Endothelial cell of umbilical vein (primary cell): ENCODE measurements at regions of chr16 and their contacts with region 1.

Region 1: GRCh38 chr16:4402439-4403132 is 13.8 kb downstream of the CORO7 start:
- DNase-seq: peak; percentile 59
- H3K4me3 ChIP-seq: no peak overlapping the region
- H3K27ac ChIP-seq: no peak overlapping the region
- H3K4me1 ChIP-seq: peaks cover 1% of the 10 kb centered on the region
- H3K27me3 ChIP-seq: no peaks in the 10 kb centered on the region
- CTCF ChIP-seq: peak; percentile 88 to 98
- POLR2A ChIP-seq: no peak

Region 2: GRCh38 chr16:3971261-3971660 is 431.3 kb before region 1 on chr16:
- CTCF ChIA-PET with region 1: no interaction called
- POLR2A ChIA-PET with region 1: no interaction called
- dilution Hi-C with region 1: no loop called
- intact Hi-C with region 1: no loop called
- DNase-seq: no peak
- H3K4me3 ChIP-seq: no peak overlapping the region
- H3K27ac ChIP-seq: no peak overlapping the region
- H3K4me1 ChIP-seq: no peaks in the 10 kb centered on the region
- H3K27me3 ChIP-seq: no peaks in the 10 kb centered on the region
- CTCF ChIP-seq: no peak
- POLR2A ChIP-seq: no peak

Region 3: DNA sequence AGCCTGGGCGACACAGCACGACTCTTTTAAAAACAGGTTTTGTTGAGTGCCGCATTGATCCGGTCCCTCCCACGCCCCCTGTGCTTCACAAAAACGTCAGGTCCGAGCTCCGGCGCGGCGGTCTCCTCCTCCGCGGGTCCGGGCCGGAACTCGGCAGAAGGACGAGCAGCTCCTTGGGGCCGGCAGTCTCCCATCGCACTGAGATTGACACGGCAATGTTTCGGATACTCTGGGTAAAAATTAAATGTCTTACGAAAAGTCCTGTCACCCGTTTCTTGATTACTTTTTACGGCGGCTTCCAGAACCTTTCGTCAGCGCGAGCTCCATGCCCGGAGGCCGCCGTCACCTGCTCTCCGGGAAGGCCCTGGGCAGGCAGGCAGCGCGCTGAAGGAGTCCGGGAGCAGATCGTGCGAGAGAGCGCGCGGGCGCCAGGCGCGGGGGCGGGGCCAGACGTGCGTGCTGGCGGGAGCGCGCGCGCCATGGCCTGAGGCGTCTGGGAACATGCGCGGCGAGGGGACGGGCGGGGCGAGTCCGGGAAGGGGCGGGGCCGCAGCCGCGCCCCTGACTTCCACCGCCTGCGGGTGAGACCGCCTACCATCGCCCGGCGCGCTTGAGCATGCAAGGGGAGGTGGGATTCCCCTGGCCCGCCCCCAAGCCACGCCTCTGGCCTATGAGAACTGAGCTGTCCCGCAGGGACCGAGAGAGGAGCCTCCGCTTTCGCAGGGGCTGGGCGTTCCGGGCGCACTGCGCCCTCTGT is 149.0 kb before region 1 on chr16:
- CTCF ChIA-PET with region 1: interaction called, 31 read pairs
- POLR2A ChIA-PET with region 1: no interaction called
- dilution Hi-C with region 1: no loop called
- intact Hi-C with region 1: no loop called
- DNase-seq: peak; percentile 99
- H3K4me3 ChIP-seq: peak overlapping the region; percentile 29 to 73 (median 40)
- H3K27ac ChIP-seq: peak overlapping the region; percentile 7
- H3K4me1 ChIP-seq: no peaks in the 10 kb centered on the region
- H3K27me3 ChIP-seq: no peaks in the 10 kb centered on the region
- CTCF ChIP-seq: no peak
- POLR2A ChIP-seq: peak; percentile 83

Region 4: DNA sequence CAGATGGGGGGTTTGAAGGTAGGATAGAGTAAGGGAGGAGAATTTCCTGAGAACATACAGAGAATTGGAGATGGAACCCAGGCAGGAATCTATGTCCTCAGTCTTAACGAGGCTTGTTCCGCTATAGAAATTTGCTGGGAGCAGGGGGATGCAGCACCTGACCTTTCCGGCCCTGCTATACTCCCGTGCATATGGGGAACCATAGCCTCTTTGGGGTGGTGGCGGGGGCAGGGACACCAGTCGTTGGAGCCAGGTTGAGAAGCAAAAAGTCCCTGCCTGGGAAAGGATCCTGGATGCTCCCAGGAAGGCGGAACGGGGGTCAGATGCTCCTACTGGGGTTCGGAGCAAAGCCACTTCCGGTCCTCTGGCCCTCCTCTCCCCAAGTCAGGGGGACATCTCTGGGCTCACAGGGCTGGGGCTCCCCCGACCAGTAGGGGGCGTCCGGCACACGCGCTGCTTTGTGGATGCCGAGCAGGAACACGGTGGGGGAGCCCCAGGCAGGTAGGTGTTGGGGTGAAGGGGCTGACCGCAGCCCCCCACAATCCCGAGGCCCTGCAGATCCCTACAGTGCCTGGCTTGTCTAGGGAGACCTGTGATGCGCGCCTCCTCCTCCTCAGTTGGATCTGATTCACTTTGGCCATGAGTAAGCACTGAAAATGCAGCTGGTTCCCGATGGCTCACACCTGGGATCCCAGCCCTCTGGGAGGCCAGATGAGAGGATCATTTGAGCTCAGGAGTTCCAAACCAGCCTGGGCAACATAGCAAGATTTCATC is 114.3 kb before region 1 on chr16:
- CTCF ChIA-PET with region 1: interaction called, 36 read pairs
- POLR2A ChIA-PET with region 1: interaction called, 7 read pairs
- dilution Hi-C with region 1: no loop called
- intact Hi-C with region 1: loop called (anchors 2 kb)
- DNase-seq: peak; percentile 54
- H3K4me3 ChIP-seq: no peak overlapping the region
- H3K27ac ChIP-seq: no peak overlapping the region
- H3K4me1 ChIP-seq: no peaks in the 10 kb centered on the region
- H3K27me3 ChIP-seq: peaks cover 0 to 4% of the 10 kb centered on the region in 2 experiments
- CTCF ChIP-seq: peak; percentile 96 to 97
- POLR2A ChIP-seq: no peak

Region 5: DNA sequence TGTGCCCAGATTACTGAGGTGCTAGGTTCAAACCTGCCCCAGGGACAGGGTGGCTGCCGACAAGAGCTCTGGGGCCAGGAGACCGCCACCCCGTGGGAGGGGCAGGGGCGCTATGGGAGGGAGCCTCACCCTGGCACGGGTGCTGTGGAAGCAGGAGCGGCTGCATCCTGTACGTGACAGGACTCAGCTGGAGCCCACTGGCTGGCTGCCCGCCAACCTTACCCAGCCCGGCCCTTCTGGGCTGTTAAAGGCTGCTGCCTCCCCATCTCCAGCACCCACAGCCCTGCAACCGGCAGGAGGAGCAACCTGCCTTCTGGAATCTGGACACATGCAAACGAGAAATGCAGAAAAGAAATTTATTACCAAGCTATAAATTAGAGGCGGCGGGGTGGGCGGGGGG is 62.7 kb before region 1 on chr16:
- CTCF ChIA-PET with region 1: interaction called, 29 read pairs
- POLR2A ChIA-PET with region 1: no interaction called
- dilution Hi-C with region 1: no loop called
- intact Hi-C with region 1: no loop called
- DNase-seq: peak; percentile 64
- H3K4me3 ChIP-seq: no peak overlapping the region
- H3K27ac ChIP-seq: no peak overlapping the region
- H3K4me1 ChIP-seq: no peaks in the 10 kb centered on the region
- H3K27me3 ChIP-seq: no peaks in the 10 kb centered on the region
- CTCF ChIP-seq: no peak
- POLR2A ChIP-seq: no peak

Region 6: GRCh38 chr16:4373863-4374742 is 28.5 kb before region 1 on chr16:
- CTCF ChIA-PET with region 1: interaction called, 17 read pairs
- POLR2A ChIA-PET with region 1: no interaction called
- dilution Hi-C with region 1: no loop called
- intact Hi-C with region 1: no loop called
- DNase-seq: no peak
- H3K4me3 ChIP-seq: no peak overlapping the region
- H3K27ac ChIP-seq: no peak overlapping the region
- H3K4me1 ChIP-seq: peaks cover 6% of the 10 kb centered on the region
- H3K27me3 ChIP-seq: no peaks in the 10 kb centered on the region
- CTCF ChIP-seq: no peak
- POLR2A ChIP-seq: no peak

Region 7: GRCh38 chr16:4450926-4451619 is 48.5 kb after region 1 on chr16:
- CTCF ChIA-PET with region 1: no interaction called
- POLR2A ChIA-PET with region 1: no interaction called
- dilution Hi-C with region 1: no loop called
- intact Hi-C with region 1: no loop called
- DNase-seq: no peak
- H3K4me3 ChIP-seq: no peak overlapping the region
- H3K27ac ChIP-seq: no peak overlapping the region
- H3K4me1 ChIP-seq: no peaks in the 10 kb centered on the region
- H3K27me3 ChIP-seq: no peaks in the 10 kb centered on the region
- CTCF ChIP-seq: no peak
- POLR2A ChIP-seq: no peak

Region 8: GRCh38 chr16:4465977-4466779 is 63.6 kb after region 1 on chr16:
- CTCF ChIA-PET with region 1: no interaction called
- POLR2A ChIA-PET with region 1: no interaction called
- dilution Hi-C with region 1: no loop called
- intact Hi-C with region 1: no loop called
- DNase-seq: no peak
- H3K4me3 ChIP-seq: no peak overlapping the region
- H3K27ac ChIP-seq: no peak overlapping the region
- H3K4me1 ChIP-seq: no peaks in the 10 kb centered on the region
- H3K27me3 ChIP-seq: no peaks in the 10 kb centered on the region
- CTCF ChIP-seq: no peak
- POLR2A ChIP-seq: no peak

Region 9: GRCh38 chr16:4746991-4747574 is 344.5 kb after region 1 on chr16:
- CTCF ChIA-PET with region 1: no interaction called
- POLR2A ChIA-PET with region 1: no interaction called
- dilution Hi-C with region 1: no loop called
- intact Hi-C with region 1: no loop called
- DNase-seq: no peak
- H3K4me3 ChIP-seq: no peak overlapping the region
- H3K27ac ChIP-seq: no peak overlapping the region
- H3K4me1 ChIP-seq: no peaks in the 10 kb centered on the region
- H3K27me3 ChIP-seq: no peaks in the 10 kb centered on the region
- CTCF ChIP-seq: no peak
- POLR2A ChIP-seq: no peak